GM12878 (cell line): ENCODE measurements at regions of chr13 and their contacts with region 1.

Region 1: DNA sequence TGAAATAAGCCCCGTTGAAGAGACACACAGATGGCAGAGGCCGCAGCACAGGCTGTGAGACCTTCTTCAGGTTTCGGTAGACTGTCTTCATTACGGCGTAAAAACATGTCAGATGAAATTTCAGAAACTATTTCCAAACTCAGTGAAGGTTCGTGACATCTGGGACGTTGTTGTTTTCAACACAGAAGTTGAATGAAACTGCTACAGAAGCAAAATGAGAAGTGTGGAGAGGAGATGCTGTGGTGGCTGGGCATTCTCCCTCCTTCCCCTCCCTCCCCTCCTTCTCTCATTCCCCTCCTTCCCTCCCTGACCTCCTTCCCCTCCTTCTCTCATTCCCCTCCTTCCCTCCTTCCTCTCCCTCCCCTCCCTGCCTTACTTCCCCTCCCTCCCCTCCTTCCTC is 113.6 kb downstream of the ATP11A start:
- DNase-seq: peak; percentile 70
- ATAC-seq: peak; percentile 72
- H3K4me3 ChIP-seq: peak overlapping the region; percentile 42; the same call in 1 of the 2 replicates
- H3K27ac ChIP-seq: peak overlapping the region; percentile 91
- H3K4me1 ChIP-seq: peaks cover 16% of the 10 kb centered on the region; the same call in 1 of the 2 replicates
- H3K27me3 ChIP-seq: no peaks in the 10 kb centered on the region
- CTCF ChIP-seq: no peak
- EP300 ChIP-seq: no peak; a peak in 1 of 4 replicates
- POLR2A ChIP-seq: no peak
- RAD21 ChIP-seq: no peak

Region 2: DNA sequence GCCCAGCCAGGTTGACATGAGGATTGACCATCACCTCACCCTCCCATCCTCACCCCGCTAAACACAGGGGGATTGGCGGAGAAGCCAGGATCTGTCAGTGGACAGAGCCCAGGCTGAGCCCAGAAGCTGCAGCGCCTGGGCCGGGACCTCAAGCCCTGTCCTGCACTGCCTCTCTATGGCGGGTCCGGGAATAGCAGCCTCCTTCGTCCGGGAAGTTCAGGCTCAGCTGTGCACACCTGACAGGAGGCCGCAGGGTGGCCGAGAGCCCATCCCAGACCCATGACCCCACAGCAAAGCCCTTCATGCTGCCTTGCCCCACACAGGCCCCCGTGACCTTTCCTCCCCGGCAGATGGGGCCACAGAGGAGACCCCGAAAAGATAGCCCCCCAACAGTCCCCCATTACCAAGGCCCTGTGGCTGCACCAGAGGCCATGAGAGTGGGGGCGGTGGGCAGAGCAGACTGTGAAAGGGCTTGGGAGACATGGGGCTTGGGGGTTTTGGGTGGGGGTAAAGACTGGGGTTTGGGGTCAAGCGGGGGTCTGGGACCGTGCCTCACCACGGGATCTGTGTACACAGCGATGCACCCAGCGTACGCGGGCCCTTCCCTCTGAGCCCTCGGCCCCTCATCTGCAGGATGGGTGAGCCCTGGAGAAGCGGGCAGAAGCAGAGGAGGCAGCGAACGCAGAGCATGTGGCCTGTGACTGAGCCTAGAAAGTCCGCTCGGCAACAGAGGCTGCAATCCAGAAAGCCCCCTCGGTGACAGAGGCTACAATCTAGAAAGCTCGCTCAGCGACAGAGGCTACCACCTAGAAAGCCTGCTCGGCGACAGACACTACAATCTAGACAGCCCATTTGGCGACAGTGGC is 359.2 kb before region 1 on chr13:
- CTCF ChIA-PET with region 1: no interaction called
- POLR2A ChIA-PET with region 1: no interaction called
- RAD21 ChIA-PET with region 1: no interaction called
- SMC1A ChIA-PET with region 1: no interaction called
- in situ Hi-C with region 1: no loop called
- intact Hi-C with region 1: no loop called
- DNase-seq: no peak
- ATAC-seq: peak; percentile 91
- H3K4me3 ChIP-seq: no peak overlapping the region
- H3K27ac ChIP-seq: no peak overlapping the region
- H3K4me1 ChIP-seq: no peaks in the 10 kb centered on the region
- H3K27me3 ChIP-seq: no peaks in the 10 kb centered on the region
- CTCF ChIP-seq: peak; percentile 78 to 93 (median 81)
- EP300 ChIP-seq: no peak
- POLR2A ChIP-seq: no peak
- RAD21 ChIP-seq: peak; percentile 79

Region 3: DNA sequence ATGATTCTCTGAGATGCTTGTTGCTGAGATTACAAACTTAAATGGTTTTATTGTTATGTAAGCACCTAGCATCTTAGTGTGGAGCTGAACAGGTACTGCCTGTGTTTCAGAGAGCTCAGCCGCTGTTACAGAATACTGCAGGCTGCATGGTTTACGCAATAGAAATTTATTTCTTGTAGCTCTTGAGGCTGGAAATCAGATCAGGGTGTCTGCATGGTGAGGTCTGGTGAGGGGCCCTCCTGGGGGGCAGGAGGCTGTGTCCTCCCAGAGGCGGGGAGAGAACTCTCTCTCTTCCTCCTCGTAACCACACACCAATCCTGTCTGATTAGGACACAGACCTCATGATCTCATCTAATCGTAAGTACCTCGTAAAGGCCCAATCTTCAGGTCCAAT is 100.4 kb before region 1 on chr13:
- CTCF ChIA-PET with region 1: no interaction called
- POLR2A ChIA-PET with region 1: no interaction called
- RAD21 ChIA-PET with region 1: no interaction called
- SMC1A ChIA-PET with region 1: no interaction called
- in situ Hi-C with region 1: no loop called
- intact Hi-C with region 1: no loop called
- DNase-seq: no peak
- ATAC-seq: no peak
- H3K4me3 ChIP-seq: no peak overlapping the region
- H3K27ac ChIP-seq: no peak overlapping the region
- H3K4me1 ChIP-seq: no peaks in the 10 kb centered on the region
- H3K27me3 ChIP-seq: no peaks in the 10 kb centered on the region
- CTCF ChIP-seq: no peak
- EP300 ChIP-seq: no peak
- POLR2A ChIP-seq: no peak
- RAD21 ChIP-seq: no peak

Region 4: GRCh38 chr13:112752711-112753541 is 50.5 kb before region 1 on chr13:
- CTCF ChIA-PET with region 1: no interaction called
- POLR2A ChIA-PET with region 1: no interaction called
- RAD21 ChIA-PET with region 1: no interaction called
- SMC1A ChIA-PET with region 1: no interaction called
- in situ Hi-C with region 1: no loop called
- intact Hi-C with region 1: no loop called
- DNase-seq: no peak
- ATAC-seq: no peak
- H3K4me3 ChIP-seq: no peak overlapping the region
- H3K27ac ChIP-seq: no peak overlapping the region
- H3K4me1 ChIP-seq: no peaks in the 10 kb centered on the region
- H3K27me3 ChIP-seq: no peaks in the 10 kb centered on the region
- CTCF ChIP-seq: no peak
- EP300 ChIP-seq: no peak
- POLR2A ChIP-seq: no peak
- RAD21 ChIP-seq: no peak

Region 5: DNA sequence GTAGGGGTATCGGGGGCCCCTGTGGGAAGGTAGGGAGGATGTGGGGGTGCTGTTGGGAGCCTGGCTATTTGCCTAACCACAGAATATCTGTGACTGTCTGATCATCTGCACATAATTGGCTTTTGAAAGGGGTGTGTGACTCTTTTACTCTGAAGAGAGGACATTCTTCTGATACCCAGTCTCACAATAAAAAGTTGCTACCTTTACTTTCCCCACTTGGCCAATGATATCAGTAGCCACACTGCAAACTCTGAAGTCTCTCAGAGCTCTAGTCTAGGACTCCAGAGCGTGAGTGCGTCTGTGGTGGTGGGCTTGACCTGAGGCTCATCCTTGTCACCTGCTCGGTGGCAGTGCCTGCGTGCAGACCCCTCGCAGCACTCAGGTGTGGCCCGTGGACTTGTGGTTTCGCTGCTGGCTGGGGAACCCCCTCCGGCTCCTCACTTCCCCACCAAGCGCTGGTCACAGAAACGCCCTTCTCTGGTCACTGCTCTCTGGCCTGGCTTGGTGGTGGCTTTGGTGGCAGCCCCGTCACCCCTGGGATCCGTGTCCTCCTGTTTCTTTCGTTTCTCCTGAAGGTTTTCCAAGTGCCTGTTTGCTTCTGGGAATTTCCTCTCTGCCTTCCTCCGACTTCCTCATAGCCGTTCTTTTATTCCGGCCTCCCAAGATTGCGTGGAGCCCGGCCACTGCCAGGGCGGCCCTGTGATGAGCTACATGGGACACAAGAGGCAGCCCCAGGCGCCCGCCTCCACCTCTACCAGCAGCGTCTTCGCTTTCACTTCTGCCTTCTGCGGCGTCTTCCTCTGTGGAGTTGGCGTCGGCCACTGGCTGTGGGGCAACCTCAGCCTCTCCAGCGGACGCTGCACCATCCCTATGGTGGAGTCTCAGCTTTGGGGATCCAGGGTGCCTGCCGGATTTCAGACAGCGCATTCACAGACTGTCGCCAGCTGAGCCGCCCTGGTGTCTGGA is 35.6 kb before region 1 on chr13:
- CTCF ChIA-PET with region 1: interaction called, 3 read pairs
- POLR2A ChIA-PET with region 1: interaction called, 5 read pairs
- RAD21 ChIA-PET with region 1: interaction called, 9 read pairs
- SMC1A ChIA-PET with region 1: interaction called, 4 read pairs
- in situ Hi-C with region 1: no loop called
- intact Hi-C with region 1: loop called (anchors 1 kb)
- DNase-seq: peak; percentile 17
- ATAC-seq: peak; percentile 89
- H3K4me3 ChIP-seq: peak overlapping the region; percentile 58; the same call in 1 of the 2 replicates
- H3K27ac ChIP-seq: peak overlapping the region; percentile 78
- H3K4me1 ChIP-seq: peaks cover 19% of the 10 kb centered on the region
- H3K27me3 ChIP-seq: no peaks in the 10 kb centered on the region
- CTCF ChIP-seq: no peak
- EP300 ChIP-seq: peak in 1 of 2 experiments; percentile 69; a peak in 2 of 4 replicates
- POLR2A ChIP-seq: no peak
- RAD21 ChIP-seq: no peak

Region 6: DNA sequence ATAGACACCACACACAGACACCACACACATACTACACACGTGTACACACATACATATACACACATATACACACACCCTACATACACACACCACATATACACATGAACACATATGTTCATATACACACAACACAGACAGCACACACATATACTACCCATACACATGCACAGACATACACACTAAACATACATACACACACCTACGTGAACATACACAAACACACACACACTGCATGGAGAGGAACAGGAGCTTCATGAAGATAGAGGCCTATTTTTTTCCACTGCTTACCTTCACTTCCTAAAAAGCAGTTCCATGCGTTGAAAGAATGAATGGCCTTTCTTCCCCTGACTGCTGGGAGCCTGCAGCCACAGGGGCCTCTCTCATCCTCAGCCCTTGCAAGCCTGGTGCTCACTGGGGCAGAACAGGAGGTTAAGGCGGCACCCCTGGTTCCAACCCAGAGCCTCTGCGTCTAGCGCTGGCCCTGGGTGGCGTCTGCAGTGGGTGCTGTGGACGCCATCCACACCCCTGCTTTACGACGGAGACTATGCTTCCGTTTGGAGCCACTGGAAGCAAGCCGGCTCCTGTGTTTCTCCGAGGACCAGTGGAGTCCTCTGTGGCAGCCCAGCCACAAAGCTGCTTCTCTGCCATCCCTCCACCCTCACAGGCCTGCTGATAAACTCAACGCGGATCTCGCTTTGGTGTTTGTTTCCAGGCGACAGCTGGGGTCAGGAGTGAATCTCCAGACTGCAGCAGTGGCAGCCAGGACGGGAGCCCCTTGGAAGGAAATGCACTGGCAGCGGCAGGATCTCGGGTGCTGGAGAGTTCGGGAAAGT is 1330.9 kb after region 1 on chr13:
- CTCF ChIA-PET with region 1: no interaction called
- POLR2A ChIA-PET with region 1: no interaction called
- RAD21 ChIA-PET with region 1: no interaction called
- SMC1A ChIA-PET with region 1: no interaction called
- in situ Hi-C with region 1: no loop called
- intact Hi-C with region 1: no loop called
- DNase-seq: no peak
- ATAC-seq: peak; percentile 18
- H3K4me3 ChIP-seq: no peak overlapping the region
- H3K27ac ChIP-seq: no peak overlapping the region
- H3K4me1 ChIP-seq: peaks cover 14% of the 10 kb centered on the region
- H3K27me3 ChIP-seq: no peaks in the 10 kb centered on the region
- CTCF ChIP-seq: no peak
- EP300 ChIP-seq: no peak
- POLR2A ChIP-seq: no peak
- RAD21 ChIP-seq: no peak